ENCODE measurements at regions of chr5 and their contacts with region 1.

Region 1: GRCh38 chr5:173925448-173926071 is 37.4 kb downstream of the CPEB4 start:
- DNase-seq: no peak
- ATAC-seq: peak; percentile 75
- H3K4me3 ChIP-seq: no peak overlapping the region
- H3K27ac ChIP-seq: peak overlapping the region; percentile 32; the same call in 1 of the 2 replicates
- H3K4me1 ChIP-seq: peaks cover 21% of the 10 kb centered on the region
- H3K27me3 ChIP-seq: no peaks in the 10 kb centered on the region
- CTCF ChIP-seq: peak; percentile 60 to 70 (median 63)
- EP300 ChIP-seq: no peak
- POLR2A ChIP-seq: no peak
- RAD21 ChIP-seq: peak; percentile 76

Region 2: DNA sequence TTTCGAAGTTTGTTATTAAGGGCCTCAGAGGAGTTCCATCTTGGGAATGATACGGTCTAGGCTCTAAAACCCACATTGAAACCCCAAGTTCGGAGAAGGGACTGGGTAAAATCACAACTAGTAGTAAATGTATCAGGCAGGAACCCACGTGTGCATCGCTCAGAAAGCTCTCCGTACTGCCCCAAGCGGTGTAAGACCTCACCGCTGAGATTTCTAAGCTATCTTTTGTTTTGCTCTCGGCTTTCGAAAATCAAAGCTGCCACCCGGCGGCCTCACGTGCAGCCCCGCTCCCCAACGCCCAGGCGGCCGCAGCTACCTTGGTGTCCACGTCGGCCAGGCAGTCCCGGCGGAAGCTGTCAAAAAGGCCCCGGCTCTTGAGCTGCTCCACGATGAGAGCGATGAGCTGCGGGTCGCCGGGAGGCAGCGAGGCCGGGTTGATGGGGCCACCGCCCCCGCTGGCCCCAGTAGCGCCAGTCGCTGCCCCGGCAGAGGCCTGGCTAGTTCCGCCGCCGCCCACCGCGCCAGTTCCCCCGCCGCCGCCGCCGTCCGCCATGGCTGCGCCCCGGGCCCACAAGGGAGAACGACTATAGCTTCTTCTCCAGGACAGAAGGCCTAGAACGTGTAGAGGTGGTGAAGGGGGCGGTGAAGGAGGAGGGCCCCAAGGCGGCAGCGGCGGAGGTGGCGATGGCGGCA is 309.5 kb before region 1 on chr5:
- CTCF ChIA-PET with region 1: interaction called, 267 read pairs
- POLR2A ChIA-PET with region 1: interaction called, 5 read pairs
- RAD21 ChIA-PET with region 1: interaction called, 58 read pairs
- SMC1A ChIA-PET with region 1: interaction called, 199 read pairs
- in situ Hi-C with region 1: loop called (anchors 5 kb)
- intact Hi-C with region 1: loop called (anchors 1 kb)
- DNase-seq: peak; percentile 43
- ATAC-seq: peak; percentile 86
- H3K4me3 ChIP-seq: peak overlapping the region; percentile 66
- H3K27ac ChIP-seq: peak overlapping the region; percentile 72
- H3K4me1 ChIP-seq: peaks cover 14% of the 10 kb centered on the region
- H3K27me3 ChIP-seq: no peaks in the 10 kb centered on the region
- CTCF ChIP-seq: peak; percentile 70 to 82 (median 77)
- EP300 ChIP-seq: no peak
- POLR2A ChIP-seq: peak; percentile 73
- RAD21 ChIP-seq: peak; percentile 29; the same call in 1 of the 2 replicates

Region 3: DNA sequence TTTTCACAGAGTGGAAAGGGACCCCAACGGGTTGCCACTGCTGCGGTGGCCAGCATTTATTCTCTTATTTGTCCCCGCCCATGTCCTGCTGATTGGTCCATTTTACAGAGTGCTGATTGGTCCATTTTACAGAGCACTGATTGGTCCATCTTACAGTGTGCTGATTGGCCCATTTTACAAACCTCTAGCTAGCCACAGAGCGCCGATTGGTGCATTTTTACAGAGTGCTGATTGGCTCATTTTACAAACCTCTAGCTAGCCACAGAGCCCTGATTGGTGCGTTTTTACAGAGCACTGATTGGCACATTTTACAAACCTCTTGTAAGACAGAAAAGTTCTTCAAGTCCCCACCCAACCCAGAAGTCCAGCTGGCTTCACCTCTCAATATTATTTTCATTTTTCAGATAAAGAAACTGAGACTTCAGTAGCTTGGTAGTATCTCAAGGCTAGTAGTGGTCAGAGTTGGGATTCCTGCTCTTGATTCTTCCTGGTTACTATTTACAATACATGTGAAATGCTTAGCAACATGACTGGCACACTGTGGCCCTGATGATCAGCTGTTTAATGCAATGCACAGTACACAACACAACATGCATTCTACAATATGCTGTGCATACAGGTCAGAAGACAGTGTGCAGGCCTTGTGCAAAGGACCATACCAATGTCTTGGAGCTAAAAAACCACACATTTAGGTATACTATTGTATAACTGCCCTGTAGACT is 245.5 kb before region 1 on chr5:
- CTCF ChIA-PET with region 1: interaction called, 4 read pairs
- POLR2A ChIA-PET with region 1: interaction called, 3 read pairs
- RAD21 ChIA-PET with region 1: interaction called, 3 read pairs
- SMC1A ChIA-PET with region 1: interaction called, 10 read pairs
- in situ Hi-C with region 1: no loop called
- intact Hi-C with region 1: loop called (anchors 10 kb)
- DNase-seq: peak; percentile 47
- ATAC-seq: peak; percentile 84
- H3K4me3 ChIP-seq: no peak overlapping the region
- H3K27ac ChIP-seq: peak overlapping the region; percentile 72
- H3K4me1 ChIP-seq: peaks cover 22% of the 10 kb centered on the region
- H3K27me3 ChIP-seq: no peaks in the 10 kb centered on the region
- CTCF ChIP-seq: no peak
- EP300 ChIP-seq: no peak
- POLR2A ChIP-seq: no peak
- RAD21 ChIP-seq: no peak

Region 4: DNA sequence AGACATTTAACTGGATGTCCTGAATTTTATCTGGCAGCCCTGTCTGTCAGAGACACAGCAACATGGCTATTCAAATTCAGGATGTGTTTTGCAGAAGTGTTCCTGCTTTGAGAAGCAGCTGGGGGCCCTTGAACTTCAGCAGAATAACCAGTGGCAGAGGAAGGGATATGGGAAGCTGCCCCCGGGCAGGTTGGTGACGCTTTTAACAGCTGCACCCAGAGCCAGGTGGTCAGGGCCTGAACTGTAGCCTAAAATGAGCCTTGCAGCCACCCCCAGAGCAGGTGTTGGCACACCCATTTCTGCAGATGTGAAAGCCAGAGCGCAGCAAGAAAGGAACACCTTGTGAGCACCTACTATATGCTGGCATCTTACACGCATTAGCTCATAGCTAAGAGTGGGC is 180.4 kb before region 1 on chr5:
- CTCF ChIA-PET with region 1: interaction called, 8 read pairs
- POLR2A ChIA-PET with region 1: interaction called, 3 read pairs
- RAD21 ChIA-PET with region 1: interaction called, 11 read pairs
- SMC1A ChIA-PET with region 1: interaction called, 15 read pairs
- in situ Hi-C with region 1: no loop called
- intact Hi-C with region 1: no loop called
- DNase-seq: peak; percentile 47
- ATAC-seq: peak; percentile 64
- H3K4me3 ChIP-seq: no peak overlapping the region
- H3K27ac ChIP-seq: peak overlapping the region; percentile 95
- H3K4me1 ChIP-seq: peaks cover 54% of the 10 kb centered on the region
- H3K27me3 ChIP-seq: no peaks in the 10 kb centered on the region
- CTCF ChIP-seq: no peak
- EP300 ChIP-seq: no peak; a peak in 1 of 4 replicates
- POLR2A ChIP-seq: no peak
- RAD21 ChIP-seq: 0 out of 2 replicates have a peak, but pooled peaks have one; percentile 0

Region 5: DNA sequence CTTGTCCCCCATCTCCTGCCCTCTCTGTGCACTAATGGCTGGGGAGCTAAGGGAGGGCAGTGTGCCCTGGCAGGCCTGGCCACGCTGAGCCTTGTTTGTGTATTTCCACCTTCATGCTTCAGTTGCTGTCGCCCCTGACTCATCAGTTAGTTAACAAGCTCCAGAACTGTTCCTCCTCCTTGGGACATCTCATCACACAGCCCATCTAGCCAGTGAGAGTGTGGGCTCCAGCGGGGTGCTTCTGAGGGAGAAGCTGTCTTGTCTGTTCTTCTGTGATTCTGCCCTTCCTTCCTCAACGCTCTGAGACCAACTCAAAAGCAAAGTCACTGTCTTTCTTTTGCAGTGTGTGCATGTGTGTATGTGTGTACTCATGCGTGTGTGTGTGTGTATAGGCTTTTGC is 95.7 kb before region 1 on chr5:
- CTCF ChIA-PET with region 1: interaction called, 29 read pairs
- POLR2A ChIA-PET with region 1: interaction called, 4 read pairs
- RAD21 ChIA-PET with region 1: interaction called, 12 read pairs
- SMC1A ChIA-PET with region 1: interaction called, 18 read pairs
- in situ Hi-C with region 1: no loop called
- intact Hi-C with region 1: no loop called
- DNase-seq: no peak
- ATAC-seq: peak; percentile 73
- H3K4me3 ChIP-seq: no peak overlapping the region
- H3K27ac ChIP-seq: peak overlapping the region; percentile 58
- H3K4me1 ChIP-seq: peaks cover 36% of the 10 kb centered on the region
- H3K27me3 ChIP-seq: no peaks in the 10 kb centered on the region
- CTCF ChIP-seq: no peak
- EP300 ChIP-seq: no peak
- POLR2A ChIP-seq: no peak
- RAD21 ChIP-seq: 0 out of 2 replicates have a peak, but pooled peaks have one; percentile 2

Region 6: GRCh38 chr5:173902743-173903142 is 22.8 kb before region 1 on chr5:
- CTCF ChIA-PET with region 1: interaction called, 40 read pairs
- POLR2A ChIA-PET with region 1: interaction called, 6 read pairs
- RAD21 ChIA-PET with region 1: interaction called, 142 read pairs
- SMC1A ChIA-PET with region 1: interaction called, 361 read pairs
- in situ Hi-C with region 1: no loop called
- intact Hi-C with region 1: no loop called
- DNase-seq: no peak
- ATAC-seq: no peak
- H3K4me3 ChIP-seq: 0 out of 2 replicates have a peak overlapping the region, but pooled peaks have one; percentile 0
- H3K27ac ChIP-seq: peak overlapping the region; percentile 59
- H3K4me1 ChIP-seq: peaks cover 28% of the 10 kb centered on the region
- H3K27me3 ChIP-seq: no peaks in the 10 kb centered on the region
- CTCF ChIP-seq: no peak
- EP300 ChIP-seq: no peak
- POLR2A ChIP-seq: no peak
- RAD21 ChIP-seq: no peak

Region 7: GRCh38 chr5:173972925-173973615 is 47.5 kb after region 1 on chr5:
- CTCF ChIA-PET with region 1: interaction called, 30 read pairs
- POLR2A ChIA-PET with region 1: no interaction called
- RAD21 ChIA-PET with region 1: interaction called, 14 read pairs
- SMC1A ChIA-PET with region 1: interaction called, 13 read pairs
- in situ Hi-C with region 1: no loop called
- intact Hi-C with region 1: no loop called
- DNase-seq: peak; percentile 40
- ATAC-seq: peak; percentile 92
- H3K4me3 ChIP-seq: peak overlapping the region; percentile 66
- H3K27ac ChIP-seq: no peak overlapping the region
- H3K4me1 ChIP-seq: peaks cover 12% of the 10 kb centered on the region
- H3K27me3 ChIP-seq: no peaks in the 10 kb centered on the region
- CTCF ChIP-seq: peak; percentile 77 to 88 (median 82); a peak in 5 of 6 replicates
- EP300 ChIP-seq: no peak
- POLR2A ChIP-seq: no peak
- RAD21 ChIP-seq: peak; percentile 84